ENCODE measurements at regions of chr5 and their contacts with region 1.

Region 1: GRCh38 chr5:72837524-72838096 is 21.1 kb downstream of the TNPO1 start:
- DNase-seq: no peak
- H3K4me3 ChIP-seq: no peak overlapping the region
- H3K27ac ChIP-seq: peak overlapping the region; percentile 58 to 71
- H3K4me1 ChIP-seq: peaks cover 16 to 28% of the 10 kb centered on the region in 2 donors
- H3K27me3 ChIP-seq: no peaks in the 10 kb centered on the region
- CTCF ChIP-seq: no peak

Region 2: GRCh38 chr5:72441861-72442540 is 395.6 kb before region 1 on chr5:
- intact Hi-C with region 1: loop called (anchors 1 kb)
- DNase-seq: peak in 1 of 2 donors; percentile 82
- H3K4me3 ChIP-seq: no peak overlapping the region
- H3K27ac ChIP-seq: peak overlapping the region; percentile 90 to 93
- H3K4me1 ChIP-seq: peaks cover 4 to 43% of the 10 kb centered on the region in 2 donors
- H3K27me3 ChIP-seq: no peaks in the 10 kb centered on the region
- CTCF ChIP-seq: no peak